ENCODE measurements at regions of chr7 and their contacts with region 1.

Region 1: DNA sequence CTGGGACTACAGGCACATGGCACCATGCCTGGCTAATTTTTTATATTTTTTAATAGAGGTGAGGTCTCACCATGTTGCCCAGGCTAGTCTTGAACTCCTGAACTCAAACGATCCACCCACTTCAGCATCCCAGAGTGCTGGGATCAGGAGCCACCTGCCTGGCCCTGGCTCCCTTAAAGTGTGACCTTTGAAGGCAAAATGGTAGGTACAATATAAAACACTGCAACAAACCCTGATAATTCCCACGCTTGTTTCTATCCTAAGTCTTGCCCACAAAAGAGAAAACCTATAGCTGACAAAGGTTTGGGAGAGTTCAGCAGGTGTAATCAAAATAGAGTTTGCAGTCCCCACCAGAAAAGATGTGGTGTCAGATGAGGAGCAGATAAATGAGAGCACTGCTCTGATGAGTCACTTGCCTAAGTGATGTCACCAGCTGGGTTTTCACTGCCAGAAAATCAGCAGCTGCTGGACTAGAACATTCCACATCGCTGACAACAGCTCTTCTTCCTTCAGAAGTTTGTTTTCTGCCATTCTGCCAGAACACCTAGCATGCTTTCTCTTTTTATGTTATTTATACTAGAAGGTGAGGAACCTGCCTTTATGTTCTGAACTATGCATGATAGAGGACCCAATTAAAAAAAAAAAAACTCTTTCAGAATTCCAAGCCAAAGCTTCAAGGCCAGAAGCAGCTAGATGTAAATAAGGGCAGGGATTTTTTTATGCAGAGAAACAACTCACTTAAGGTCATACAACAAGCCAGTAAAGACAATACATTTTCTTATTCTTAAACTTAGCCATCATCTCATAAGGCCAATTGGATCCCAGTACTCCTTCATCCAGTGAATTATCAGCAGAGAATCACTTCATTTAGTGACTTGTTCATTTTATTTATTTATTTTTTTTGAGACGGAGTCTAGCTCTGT is 18.0 kb downstream of the PURB start:
- ATAC-seq: peak; percentile 65 to 100 (median 82)
- H3K4me3 ChIP-seq: no peak overlapping the region
- H3K27ac ChIP-seq: no peak overlapping the region
- H3K4me1 ChIP-seq: no peaks in the 10 kb centered on the region

Region 2: DNA sequence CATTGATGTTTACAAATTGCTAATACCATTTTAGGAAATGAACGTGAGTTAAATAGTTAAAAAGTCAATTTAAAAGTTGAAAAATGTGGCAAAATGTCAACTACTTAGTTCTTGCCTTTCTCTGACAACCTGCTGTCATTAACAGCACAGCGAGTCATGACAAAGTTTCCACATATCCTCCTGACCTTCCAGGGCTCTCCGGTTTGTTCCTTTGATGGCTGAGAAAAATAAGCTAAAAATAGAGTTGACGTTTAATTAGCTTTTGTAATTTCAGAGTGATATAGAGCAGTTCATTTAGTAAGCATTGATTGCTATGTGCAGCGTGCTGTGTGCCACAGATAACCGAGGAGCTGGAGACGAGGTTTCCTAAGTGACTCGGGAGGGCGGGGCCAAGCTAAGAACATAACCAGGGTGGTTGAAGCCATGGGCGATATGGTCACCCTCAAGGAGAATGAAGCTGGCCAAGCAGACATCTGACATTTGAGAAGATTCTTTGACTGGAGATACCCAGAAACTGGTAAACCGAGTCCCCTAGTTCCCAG is 213.0 kb before region 1 on chr7:
- in situ Hi-C with region 1: no loop called
- ATAC-seq: no peak
- H3K4me3 ChIP-seq: no peak overlapping the region
- H3K27ac ChIP-seq: no peak overlapping the region
- H3K4me1 ChIP-seq: no peaks in the 10 kb centered on the region

Region 3: DNA sequence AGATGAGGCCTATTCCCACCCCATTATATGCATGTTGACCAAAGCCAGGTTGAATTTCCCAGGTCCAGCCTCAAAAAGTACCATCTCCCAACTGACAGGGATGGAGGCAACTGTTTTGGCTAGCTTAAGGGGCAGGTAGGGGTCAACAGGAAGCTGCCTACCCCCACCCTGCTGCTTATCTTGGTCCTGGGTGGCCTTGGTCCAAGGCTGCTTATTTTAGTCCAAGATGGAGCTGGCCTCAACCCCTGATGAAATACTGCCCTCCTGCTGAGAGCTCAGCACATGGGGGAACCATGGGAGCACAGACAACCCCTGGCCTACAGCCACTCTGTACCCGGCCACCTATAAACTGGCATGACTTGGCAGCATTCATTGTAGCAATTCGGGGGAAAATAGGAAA is 88.4 kb after region 1 on chr7:
- in situ Hi-C with region 1: no loop called
- ATAC-seq: no peak
- H3K4me3 ChIP-seq: no peak overlapping the region
- H3K27ac ChIP-seq: peak overlapping the region; percentile 49 to 82
- H3K4me1 ChIP-seq: peaks cover 19 to 23% of the 10 kb centered on the region in 2 donors

Region 4: GRCh38 chr7:45111298-45112223 is 244.2 kb after region 1 on chr7 and contains the start of gene TBRG4:
- in situ Hi-C with region 1: loop called in 1 of 9 experiments (anchors 25 kb)
- ATAC-seq: peak; percentile 88 to 97 (median 96)
- H3K4me3 ChIP-seq: peak within 1 kb of the TSS; percentile 61 to 78 (median 73)
- H3K27ac ChIP-seq: peak within 1 kb of the TSS; percentile 92 to 97
- H3K4me1 ChIP-seq: peaks cover 12 to 15% of the 10 kb centered on the region in 2 donors
- total RNA-seq, gene TBRG4: 27.4 to 104 (median 44.1) TPM

Region 5: DNA sequence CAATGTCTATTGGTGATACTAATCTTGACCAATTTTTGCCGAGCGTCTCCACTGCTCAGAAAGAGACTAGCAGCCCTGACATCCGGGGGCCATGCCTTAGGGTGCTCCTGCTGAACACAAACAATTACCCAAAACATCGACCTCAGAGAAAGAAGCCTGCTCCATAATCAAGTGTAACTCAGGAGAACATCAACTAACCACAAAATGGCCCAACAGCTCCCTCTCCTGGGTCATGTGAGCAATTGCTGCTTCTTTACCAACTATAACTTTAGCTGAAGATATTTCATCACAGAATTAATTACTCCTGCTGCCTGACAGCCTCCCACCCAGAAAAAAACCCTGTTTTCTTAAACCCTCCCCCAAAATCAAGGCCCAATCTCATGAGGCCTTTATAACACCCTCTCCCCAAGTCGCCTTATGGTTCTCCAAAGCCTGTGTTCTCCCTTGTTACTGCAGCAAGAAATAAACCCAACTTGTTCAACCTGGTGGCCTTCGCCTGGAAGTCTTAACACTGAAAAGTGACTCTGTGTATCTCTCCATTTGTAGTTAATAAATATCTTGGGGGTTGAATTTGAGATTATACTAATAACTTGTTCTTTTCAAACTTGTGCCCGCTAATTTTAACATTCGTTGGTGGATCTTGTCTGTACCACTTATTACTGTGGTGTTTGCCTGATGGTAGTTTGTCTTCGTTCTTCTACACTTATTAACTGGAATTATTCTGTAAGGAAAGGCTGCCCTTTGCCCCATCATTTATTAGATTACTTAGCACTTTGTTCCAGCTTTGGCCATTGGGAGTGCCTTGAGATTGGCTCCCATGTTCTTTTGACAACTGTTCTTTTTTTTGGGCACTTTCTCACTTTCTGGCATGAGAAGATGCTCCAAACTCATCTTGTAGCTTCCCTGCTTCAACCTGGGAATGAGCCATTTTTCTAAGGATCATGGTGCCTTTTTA is 269.0 kb after region 1 on chr7:
- in situ Hi-C with region 1: loop called in 4 of 9 experiments (anchors 25 kb)
- ATAC-seq: peak; percentile 59 to 92 (median 82)
- H3K4me3 ChIP-seq: no peak overlapping the region
- H3K27ac ChIP-seq: no peak overlapping the region
- H3K4me1 ChIP-seq: no peaks in the 10 kb centered on the region